HEK293T (cell line): ENCODE measurements at regions of chr15 and their contacts with region 1.

Region 1: DNA sequence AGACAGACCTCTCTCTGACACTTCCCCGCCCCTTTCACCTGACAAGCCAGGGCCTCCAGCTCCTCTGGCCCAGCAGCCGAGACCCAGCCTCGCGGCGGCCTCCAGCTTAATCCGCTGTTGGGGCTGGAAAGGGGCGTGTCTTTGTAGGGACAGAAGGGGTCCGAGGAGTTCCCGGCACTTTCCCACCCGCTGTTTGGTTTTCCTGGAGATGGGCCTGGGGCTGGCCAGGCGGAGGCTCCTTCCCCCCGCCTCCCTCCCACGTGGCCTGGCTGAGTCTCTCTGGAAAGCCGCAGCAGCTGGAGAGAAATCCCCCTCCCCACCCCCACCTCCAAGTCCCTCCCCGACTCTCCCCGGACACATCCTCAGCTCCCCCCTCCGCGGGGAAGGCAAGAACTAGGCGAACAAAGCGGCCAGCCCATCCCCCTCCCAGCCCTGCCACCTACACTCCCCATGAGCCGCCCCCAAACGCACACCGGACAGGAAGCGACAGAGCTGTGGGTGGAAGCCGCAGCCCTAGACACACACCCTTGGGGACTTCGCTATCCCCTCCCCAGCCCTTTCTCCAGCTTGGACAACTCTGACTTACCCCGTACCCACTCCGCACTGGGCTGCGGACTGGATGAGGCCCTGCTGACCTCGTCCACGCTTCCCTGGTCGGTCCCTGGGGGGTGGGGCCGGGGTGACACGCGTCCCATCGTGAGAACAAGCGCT is 1.2 kb downstream of the IGDCC4 start:
- DNase-seq: peak; percentile 58

Region 2: GRCh38 chr15:65400760-65401610 is 20.5 kb before region 1 on chr15:
- CTCF ChIA-PET with region 1: interaction called, 20 read pairs
- POLR2A ChIA-PET with region 1: interaction called, 12 read pairs
- DNase-seq: peak; percentile 91

Region 3: DNA sequence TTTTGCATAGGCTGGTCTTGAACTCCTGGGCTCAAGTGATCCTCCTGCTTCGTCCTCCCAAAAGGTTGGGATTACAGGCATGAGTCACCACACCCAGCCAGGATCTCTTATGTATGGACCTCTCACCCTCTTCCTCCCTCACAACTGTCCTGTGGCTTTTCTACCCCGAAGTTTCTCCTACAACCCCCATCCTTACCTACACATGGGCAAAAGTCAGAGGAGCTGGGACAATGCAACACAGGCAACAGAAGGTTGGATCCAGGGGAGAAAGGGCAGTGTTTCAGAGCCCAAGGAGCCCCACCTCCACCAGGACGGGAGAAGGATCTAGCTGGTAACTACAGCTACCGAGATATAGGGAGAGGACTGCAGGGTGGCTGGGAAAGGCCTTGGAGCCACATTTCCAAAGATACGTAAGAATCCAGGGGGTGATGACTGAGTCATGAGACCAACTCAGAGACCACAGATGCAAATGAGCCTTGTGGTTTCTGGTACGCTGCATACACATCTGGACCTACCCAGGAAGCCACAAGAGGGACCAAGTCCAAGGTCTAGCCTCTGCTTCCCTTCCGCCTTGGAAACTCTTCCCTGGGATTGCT is 12.4 kb before region 1 on chr15:
- CTCF ChIA-PET with region 1: interaction called, 3 read pairs
- POLR2A ChIA-PET with region 1: interaction called, 17 read pairs
- DNase-seq: no peak

Region 4: GRCh38 chr15:65434201-65434600 is 12.7 kb after region 1 on chr15:
- CTCF ChIA-PET with region 1: interaction called, 5 read pairs
- POLR2A ChIA-PET with region 1: interaction called, 28 read pairs
- DNase-seq: no peak

Region 5: DNA sequence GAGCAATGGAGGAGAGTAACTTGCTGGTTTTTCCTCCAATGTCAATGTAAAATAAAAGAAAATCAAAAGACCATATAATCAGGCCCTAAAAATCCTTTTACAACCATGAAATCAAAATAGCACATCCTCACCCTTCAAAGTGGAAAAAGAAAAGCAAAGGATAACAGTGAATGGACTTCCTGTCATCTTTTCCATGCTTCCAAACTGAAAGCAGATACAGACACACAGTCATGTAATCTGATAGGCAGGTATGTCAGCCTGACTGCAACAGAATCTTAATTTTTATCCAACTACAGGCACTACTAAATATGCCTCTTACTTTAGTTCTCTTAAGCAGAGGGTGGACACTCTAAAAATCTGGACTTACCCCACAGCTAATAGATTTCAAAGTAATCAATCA is 29.0 kb after region 1 on chr15:
- CTCF ChIA-PET with region 1: interaction called, 10 read pairs
- POLR2A ChIA-PET with region 1: interaction called, 3 read pairs
- DNase-seq: no peak

Region 6: GRCh38 chr15:66004618-66005262 is 583.2 kb after region 1 on chr15:
- CTCF ChIA-PET with region 1: no interaction called
- POLR2A ChIA-PET with region 1: no interaction called
- DNase-seq: peak; percentile 68